Activated CD4-positive, alpha-beta T cell treated with anti-CD3 and anti-CD28 coated beads, Interleukin-2, amount 10 ng/mL, durations not matched to agents 24 days and 14 days (primary cell): ENCODE measurements at regions of chr17 and their contacts with region 1.

Region 1: GRCh38 chr17:59619293-59620063 is at the start of gene CLTC:
- DNase-seq: peak; percentile 97
- H3K4me3 Mint-ChIP-seq: peak within 1 kb of the TSS; percentile 91
- H3K27ac Mint-ChIP-seq: peak within 1 kb of the TSS; percentile 100
- H3K4me1 Mint-ChIP-seq: peaks cover 46% of the 10 kb centered on the region
- H3K27me3 Mint-ChIP-seq: peaks cover 2% of the 10 kb centered on the region
- total RNA-seq, gene CLTC: 187 and 190 TPM in 2 replicates

Region 2: GRCh38 chr17:59361916-59362810 is 257.3 kb before region 1 on chr17:
- intact Hi-C with region 1: loop called (anchors 5 kb)
- DNase-seq: peak; percentile 86
- H3K4me3 Mint-ChIP-seq: peak overlapping the region; percentile 80
- H3K27ac Mint-ChIP-seq: peak overlapping the region; percentile 96
- H3K4me1 Mint-ChIP-seq: peaks cover 64% of the 10 kb centered on the region
- H3K27me3 Mint-ChIP-seq: no peaks in the 10 kb centered on the region

Region 3: GRCh38 chr17:59565171-59565969 is 54.1 kb before region 1 on chr17 and contains the start of gene DHX40:
- intact Hi-C with region 1: loop called (anchors 1 kb)
- DNase-seq: peak; percentile 98
- H3K4me3 Mint-ChIP-seq: peak within 1 kb of the TSS; percentile 100
- H3K27ac Mint-ChIP-seq: peak within 1 kb of the TSS; percentile 100
- H3K4me1 Mint-ChIP-seq: peaks cover 21% of the 10 kb centered on the region
- H3K27me3 Mint-ChIP-seq: peaks cover 2% of the 10 kb centered on the region
- total RNA-seq, gene DHX40: 17.0 and 20.5 TPM in 2 replicates

Region 4: GRCh38 chr17:59641799-59642489 is 22.5 kb after region 1 on chr17:
- intact Hi-C with region 1: loop called (anchors 1 kb)
- DNase-seq: peak; percentile 73
- H3K4me3 Mint-ChIP-seq: peak overlapping the region; percentile 65
- H3K27ac Mint-ChIP-seq: peak overlapping the region; percentile 56
- H3K4me1 Mint-ChIP-seq: peaks cover 35% of the 10 kb centered on the region
- H3K27me3 Mint-ChIP-seq: no peaks in the 10 kb centered on the region

Region 5: GRCh38 chr17:59846394-59847165 is 227.1 kb after region 1 on chr17:
- intact Hi-C with region 1: loop called (anchors 5 kb)
- DNase-seq: peak; percentile 86
- H3K4me3 Mint-ChIP-seq: peak overlapping the region; percentile 47
- H3K27ac Mint-ChIP-seq: peak overlapping the region; percentile 92
- H3K4me1 Mint-ChIP-seq: peaks cover 53% of the 10 kb centered on the region
- H3K27me3 Mint-ChIP-seq: no peaks in the 10 kb centered on the region